ENCODE measurements at regions of chr3 and their contacts with region 1.

Region 1: DNA sequence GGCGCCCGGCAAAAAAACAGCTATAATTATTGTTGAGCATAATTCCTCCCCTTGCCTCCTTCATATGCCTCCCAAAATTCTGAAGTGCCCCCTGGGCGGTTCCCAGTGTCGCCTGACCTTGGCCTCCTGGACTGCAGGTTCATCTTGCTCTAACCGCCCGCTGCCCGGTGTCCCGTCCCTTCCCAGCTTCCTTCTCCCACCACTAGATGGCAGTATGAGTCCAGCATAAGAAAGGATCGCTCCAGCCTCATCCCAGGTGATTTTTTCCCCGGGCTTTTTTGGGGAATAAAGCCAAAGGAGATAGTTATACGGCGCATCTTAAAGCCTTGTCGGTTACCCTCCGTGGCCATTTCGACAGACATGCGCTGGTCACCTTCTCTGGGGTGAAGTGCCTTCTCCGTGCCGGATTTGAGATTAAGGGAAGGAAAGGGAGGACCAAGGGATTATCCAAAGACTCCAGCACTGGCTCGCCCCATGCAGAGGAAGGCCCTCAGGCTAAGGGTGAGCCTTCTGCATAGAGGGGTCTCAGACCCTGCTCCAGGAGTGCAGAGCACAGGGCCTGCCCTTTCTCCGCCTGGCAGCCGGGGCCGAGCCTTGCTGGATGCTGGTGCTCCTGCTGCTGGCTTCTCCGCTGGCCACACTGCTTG is 45.8 kb upstream of the TRA2B start:
- DNase-seq: peak; percentile 62 to 85
- H3K4me3 ChIP-seq: no peak overlapping the region
- H3K27ac ChIP-seq: no peak overlapping the region
- H3K4me1 ChIP-seq: no peaks in the 10 kb centered on the region
- H3K27me3 ChIP-seq: no peaks in the 10 kb centered on the region
- CTCF ChIP-seq: peak; percentile 99

Region 2: DNA sequence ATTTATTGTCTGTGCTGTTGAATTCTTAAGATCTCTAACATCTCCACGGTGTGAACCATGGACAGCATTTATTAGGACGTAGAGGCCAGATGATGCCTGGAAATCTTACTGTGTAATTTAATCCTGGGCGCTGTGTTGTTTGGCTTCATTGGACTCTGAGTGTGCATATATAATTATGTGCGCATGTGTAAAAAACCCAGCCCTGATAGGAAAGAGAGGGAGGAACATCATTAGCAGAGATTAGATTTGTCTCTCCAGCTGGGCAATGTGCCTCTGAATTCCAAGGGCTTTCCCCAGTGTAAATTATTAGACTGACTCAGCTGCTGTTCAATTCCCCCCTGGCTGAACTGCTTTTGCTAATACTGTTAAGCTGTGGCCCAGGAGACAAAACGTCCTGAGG is 581.1 kb before region 1 on chr3:
- CTCF ChIA-PET with region 1: no interaction called
- POLR2A ChIA-PET with region 1: no interaction called
- intact Hi-C with region 1: no loop called
- DNase-seq: no peak
- H3K4me3 ChIP-seq: no peak overlapping the region
- H3K27ac ChIP-seq: no peak overlapping the region
- H3K4me1 ChIP-seq: no peaks in the 10 kb centered on the region
- H3K27me3 ChIP-seq: no peaks in the 10 kb centered on the region
- CTCF ChIP-seq: no peak

Region 3: DNA sequence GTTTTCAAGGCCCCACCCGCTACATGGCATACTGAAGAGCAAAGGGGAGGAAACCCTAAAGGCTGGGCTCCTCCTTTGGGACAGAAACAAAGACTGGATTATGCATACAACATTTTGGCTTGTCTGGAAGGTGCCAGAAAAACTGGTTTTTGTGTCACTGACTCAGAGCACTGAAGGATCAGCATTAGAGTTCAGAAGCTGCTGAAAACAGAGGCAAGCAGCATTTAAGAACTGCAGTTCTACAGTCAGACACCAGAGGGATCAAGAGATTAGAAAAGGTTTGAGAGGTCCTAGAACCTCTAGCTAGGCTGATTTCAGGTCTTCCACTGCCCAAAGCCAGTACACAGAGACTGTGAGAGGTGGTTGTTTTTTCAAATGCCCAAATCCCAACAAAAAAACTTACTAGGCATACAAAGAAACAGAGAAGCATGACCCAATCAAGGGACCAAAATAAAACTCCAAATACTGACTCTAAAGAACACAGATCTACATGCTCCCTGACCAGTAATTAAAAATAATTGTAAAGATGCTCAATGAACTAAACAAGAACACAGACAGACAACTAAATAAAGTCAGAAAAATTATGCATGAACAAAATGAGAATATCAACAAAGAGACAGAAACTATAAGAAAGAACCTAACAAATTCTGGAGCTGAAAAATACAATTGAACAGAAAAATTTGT is 306.3 kb before region 1 on chr3:
- CTCF ChIA-PET with region 1: no interaction called
- POLR2A ChIA-PET with region 1: no interaction called
- intact Hi-C with region 1: loop called (anchors 5 kb)
- DNase-seq: peak; percentile 72 to 95
- H3K4me3 ChIP-seq: no peak overlapping the region
- H3K27ac ChIP-seq: peak overlapping the region; percentile 36
- H3K4me1 ChIP-seq: peaks cover 4% of the 10 kb centered on the region
- H3K27me3 ChIP-seq: no peaks in the 10 kb centered on the region
- CTCF ChIP-seq: peak; percentile 97

Region 4: GRCh38 chr3:185733980-185734724 is 249.5 kb before region 1 on chr3:
- CTCF ChIA-PET with region 1: no interaction called
- POLR2A ChIA-PET with region 1: no interaction called
- intact Hi-C with region 1: loop called (anchors 5 kb)
- DNase-seq: peak; percentile 73 to 85
- H3K4me3 ChIP-seq: no peak overlapping the region
- H3K27ac ChIP-seq: peak overlapping the region; percentile 23
- H3K4me1 ChIP-seq: peaks cover 65% of the 10 kb centered on the region
- H3K27me3 ChIP-seq: no peaks in the 10 kb centered on the region
- CTCF ChIP-seq: peak; percentile 90

Region 5: GRCh38 chr3:186241910-186242821 is 258.5 kb after region 1 on chr3:
- CTCF ChIA-PET with region 1: interaction called, 3 read pairs
- POLR2A ChIA-PET with region 1: interaction called, 3 read pairs
- intact Hi-C with region 1: loop called (anchors 1 kb)
- DNase-seq: peak; percentile 86 to 89
- H3K4me3 ChIP-seq: peak overlapping the region; percentile 61
- H3K27ac ChIP-seq: peak overlapping the region; percentile 70
- H3K4me1 ChIP-seq: peaks cover 18% of the 10 kb centered on the region
- H3K27me3 ChIP-seq: no peaks in the 10 kb centered on the region
- CTCF ChIP-seq: peak; percentile 81

Region 6: GRCh38 chr3:186277268-186277909 is 293.8 kb after region 1 on chr3:
- CTCF ChIA-PET with region 1: interaction called, 4 read pairs
- POLR2A ChIA-PET with region 1: no interaction called
- intact Hi-C with region 1: loop called (anchors 1 kb)
- DNase-seq: peak; percentile 50 to 53
- H3K4me3 ChIP-seq: no peak overlapping the region
- H3K27ac ChIP-seq: no peak overlapping the region
- H3K4me1 ChIP-seq: no peaks in the 10 kb centered on the region
- H3K27me3 ChIP-seq: peaks cover 62% of the 10 kb centered on the region
- CTCF ChIP-seq: peak; percentile 70

Region 7: GRCh38 chr3:186452517-186452916 is 468.9 kb after region 1 on chr3:
- CTCF ChIA-PET with region 1: no interaction called
- POLR2A ChIA-PET with region 1: no interaction called
- intact Hi-C with region 1: no loop called
- DNase-seq: peak; percentile 48 to 73
- H3K4me3 ChIP-seq: no peak overlapping the region
- H3K27ac ChIP-seq: no peak overlapping the region
- H3K4me1 ChIP-seq: peaks cover 3% of the 10 kb centered on the region; the same call in 1 of the 2 replicates
- H3K27me3 ChIP-seq: peaks cover 87% of the 10 kb centered on the region
- CTCF ChIP-seq: no peak

Region 8: GRCh38 chr3:186821429-186822367 is 838.1 kb after region 1 on chr3:
- CTCF ChIA-PET with region 1: no interaction called
- POLR2A ChIA-PET with region 1: no interaction called
- intact Hi-C with region 1: loop called (anchors 5 kb)
- DNase-seq: no peak
- H3K4me3 ChIP-seq: no peak overlapping the region
- H3K27ac ChIP-seq: no peak overlapping the region
- H3K4me1 ChIP-seq: peaks cover 9% of the 10 kb centered on the region
- H3K27me3 ChIP-seq: no peaks in the 10 kb centered on the region
- CTCF ChIP-seq: peak; percentile 92

Region 9: GRCh38 chr3:187714404-187714979 is 1730.9 kb after region 1 on chr3:
- CTCF ChIA-PET with region 1: no interaction called
- POLR2A ChIA-PET with region 1: no interaction called
- intact Hi-C with region 1: loop called (anchors 10 kb)
- DNase-seq: peak; percentile 74 to 82
- H3K4me3 ChIP-seq: no peak overlapping the region
- H3K27ac ChIP-seq: no peak overlapping the region
- H3K4me1 ChIP-seq: no peaks in the 10 kb centered on the region
- H3K27me3 ChIP-seq: no peaks in the 10 kb centered on the region
- CTCF ChIP-seq: peak; percentile 99